OCI-LY7 (cell line): ENCODE measurements at regions of chr2 and their contacts with region 1.

Region 1: GRCh38 chr2:189412330-189412953 is 28.8 kb upstream of the WDR75 start:
- DNase-seq: peak; percentile 39
- H3K4me3 ChIP-seq: no peak overlapping the region
- H3K27ac ChIP-seq: no peak overlapping the region
- H3K4me1 ChIP-seq: no peaks in the 10 kb centered on the region
- CTCF ChIP-seq: peak; percentile 92

Region 2: GRCh38 chr2:188524519-188525113 is 887.8 kb before region 1 on chr2:
- CTCF ChIA-PET with region 1: no interaction called
- POLR2A ChIA-PET with region 1: no interaction called
- intact Hi-C with region 1: loop called (anchors 5 kb)
- DNase-seq: peak; percentile 40
- H3K4me3 ChIP-seq: no peak overlapping the region
- H3K27ac ChIP-seq: no peak overlapping the region
- H3K4me1 ChIP-seq: no peaks in the 10 kb centered on the region
- CTCF ChIP-seq: peak; percentile 80

Region 3: DNA sequence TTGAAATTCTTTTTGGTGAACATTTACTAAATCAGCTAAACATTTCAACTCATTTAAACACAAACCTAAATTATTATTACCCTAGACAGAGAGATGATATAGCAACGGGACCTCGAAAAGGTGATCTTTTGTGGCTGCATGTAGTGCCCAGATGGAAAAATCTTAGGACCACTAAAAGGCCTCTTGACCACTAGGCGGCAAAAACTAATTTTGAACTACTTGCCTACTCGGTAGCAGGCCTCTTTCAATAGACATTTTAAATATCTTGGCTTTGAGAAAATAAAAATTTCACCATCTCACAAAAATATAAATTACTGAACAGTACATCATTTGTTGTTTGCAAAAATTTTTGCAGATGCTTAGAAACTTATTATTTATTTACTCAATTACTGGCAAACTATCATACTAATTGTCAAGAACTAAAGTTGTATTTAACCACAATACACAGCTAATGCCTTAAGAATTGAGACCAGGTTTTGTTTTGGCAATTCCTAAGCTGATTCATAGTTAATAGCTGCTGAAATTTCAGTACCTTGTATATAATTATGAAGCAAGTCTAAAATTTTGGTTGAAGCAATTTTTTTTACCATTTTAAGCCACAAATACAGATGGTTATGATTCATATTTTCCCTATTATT is 428.9 kb before region 1 on chr2:
- CTCF ChIA-PET with region 1: no interaction called
- POLR2A ChIA-PET with region 1: no interaction called
- intact Hi-C with region 1: loop called (anchors 10 kb)
- DNase-seq: peak; percentile 3
- H3K4me3 ChIP-seq: no peak overlapping the region
- H3K27ac ChIP-seq: no peak overlapping the region
- H3K4me1 ChIP-seq: no peaks in the 10 kb centered on the region
- CTCF ChIP-seq: peak; percentile 56

Region 4: DNA sequence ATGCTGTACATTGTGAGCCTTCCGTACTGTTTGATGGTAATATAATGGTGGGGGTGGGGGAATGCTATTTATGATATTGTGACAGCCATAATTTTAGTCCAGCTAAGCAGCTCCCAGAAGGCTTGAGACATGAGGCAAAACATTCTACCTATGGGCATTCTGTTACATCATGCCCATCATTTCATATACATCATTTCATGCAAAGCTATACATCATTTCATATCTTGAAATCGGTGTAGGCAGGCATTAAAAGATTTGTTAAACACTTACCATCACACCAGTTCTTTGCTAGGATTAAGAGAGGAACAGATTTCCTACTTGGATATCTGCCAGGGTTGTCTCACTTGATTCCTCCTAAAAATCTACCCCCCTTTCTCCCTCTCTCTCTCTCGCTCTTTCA is 317.3 kb before region 1 on chr2:
- CTCF ChIA-PET with region 1: interaction called, 3 read pairs
- POLR2A ChIA-PET with region 1: no interaction called
- intact Hi-C with region 1: loop called (anchors 2 kb)
- DNase-seq: no peak
- H3K4me3 ChIP-seq: no peak overlapping the region
- H3K27ac ChIP-seq: no peak overlapping the region
- H3K4me1 ChIP-seq: no peaks in the 10 kb centered on the region
- CTCF ChIP-seq: no peak

Region 5: GRCh38 chr2:189142893-189143759 is 269.3 kb before region 1 on chr2:
- CTCF ChIA-PET with region 1: no interaction called
- POLR2A ChIA-PET with region 1: no interaction called
- intact Hi-C with region 1: loop called (anchors 1 kb)
- DNase-seq: peak; percentile 56
- H3K4me3 ChIP-seq: no peak overlapping the region
- H3K27ac ChIP-seq: no peak overlapping the region
- H3K4me1 ChIP-seq: no peaks in the 10 kb centered on the region
- CTCF ChIP-seq: peak; percentile 96